ENCODE measurements at regions of chr1 and their contacts with region 1.

Region 1: DNA sequence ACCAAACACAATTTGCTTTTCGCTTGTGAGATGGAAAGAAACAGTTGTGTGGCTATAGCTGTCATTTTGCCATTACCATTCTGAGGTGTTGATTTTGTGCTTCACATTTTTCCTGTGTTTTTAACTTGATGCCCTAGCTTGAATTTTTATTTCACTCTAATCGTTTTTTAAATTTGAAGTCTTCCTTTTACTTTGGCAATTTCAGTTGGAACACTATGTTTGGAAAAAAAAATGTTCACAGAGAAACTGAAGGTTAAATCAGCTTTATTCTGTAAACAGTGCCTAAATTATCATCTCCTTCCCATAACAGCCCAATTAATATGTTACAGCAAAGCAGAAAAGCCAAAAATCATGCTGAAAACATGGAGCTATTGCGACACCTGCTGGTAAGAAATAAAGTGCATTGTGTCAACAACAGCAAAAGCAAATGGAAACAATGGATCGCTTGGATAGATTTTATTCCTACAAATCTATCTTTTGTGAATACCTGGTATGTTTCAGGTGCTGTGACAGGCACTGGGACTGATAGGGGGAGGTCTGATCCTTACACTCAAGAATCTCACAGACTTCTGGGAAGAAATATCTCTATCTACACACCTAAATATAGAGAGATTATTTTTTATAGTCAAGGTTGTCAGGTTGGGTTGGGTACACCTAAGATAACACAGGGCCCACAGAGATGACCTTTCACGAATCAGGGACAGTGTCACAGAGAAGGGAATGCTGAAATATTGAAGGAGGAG is 16.2 kb upstream of the ERICH3 start:
- DNase-seq: peak; percentile 33
- H3K4me3 Mint-ChIP-seq: no peak overlapping the region
- H3K27ac Mint-ChIP-seq: no peak overlapping the region
- H3K4me1 Mint-ChIP-seq: no peaks in the 10 kb centered on the region
- H3K27me3 Mint-ChIP-seq: peaks cover 4% of the 10 kb centered on the region

Region 2: GRCh38 chr1:74613894-74614293 is 75.9 kb before region 1 on chr1:
- CTCF ChIA-PET with region 1: no interaction called
- POLR2A ChIA-PET with region 1: no interaction called
- DNase-seq: no peak
- H3K4me3 Mint-ChIP-seq: no peak overlapping the region
- H3K27ac Mint-ChIP-seq: no peak overlapping the region
- H3K4me1 Mint-ChIP-seq: no peaks in the 10 kb centered on the region
- H3K27me3 Mint-ChIP-seq: no peaks in the 10 kb centered on the region

Region 3: GRCh38 chr1:74712881-74713280 is 23.1 kb after region 1 on chr1:
- CTCF ChIA-PET with region 1: interaction called, 10 read pairs
- POLR2A ChIA-PET with region 1: no interaction called
- DNase-seq: no peak
- H3K4me3 Mint-ChIP-seq: no peak overlapping the region
- H3K27ac Mint-ChIP-seq: no peak overlapping the region
- H3K4me1 Mint-ChIP-seq: peaks cover under 1% of the 10 kb centered on the region
- H3K27me3 Mint-ChIP-seq: no peaks in the 10 kb centered on the region

Region 4: GRCh38 chr1:74775735-74776134 is 85.9 kb after region 1 on chr1:
- CTCF ChIA-PET with region 1: no interaction called
- POLR2A ChIA-PET with region 1: no interaction called
- DNase-seq: no peak
- H3K4me3 Mint-ChIP-seq: no peak overlapping the region
- H3K27ac Mint-ChIP-seq: no peak overlapping the region
- H3K4me1 Mint-ChIP-seq: no peaks in the 10 kb centered on the region
- H3K27me3 Mint-ChIP-seq: peaks cover 13% of the 10 kb centered on the region